ENCODE measurements at regions of chr7 and their contacts with region 1.

Region 1: GRCh38 chr7:22559829-22560489 is 60.0 kb upstream of the STEAP1B start:
- DNase-seq: peak; percentile 70 to 83 (median 80)
- ATAC-seq: peak; percentile 76
- H3K4me3 ChIP-seq: no peak overlapping the region
- H3K27ac ChIP-seq: no peak overlapping the region
- H3K4me1 ChIP-seq: peaks cover 40% of the 10 kb centered on the region
- H3K27me3 ChIP-seq: no peaks in the 10 kb centered on the region
- CTCF ChIP-seq: peak; percentile 63 to 99 (median 96)
- POLR2A ChIP-seq: no peak

Region 2: DNA sequence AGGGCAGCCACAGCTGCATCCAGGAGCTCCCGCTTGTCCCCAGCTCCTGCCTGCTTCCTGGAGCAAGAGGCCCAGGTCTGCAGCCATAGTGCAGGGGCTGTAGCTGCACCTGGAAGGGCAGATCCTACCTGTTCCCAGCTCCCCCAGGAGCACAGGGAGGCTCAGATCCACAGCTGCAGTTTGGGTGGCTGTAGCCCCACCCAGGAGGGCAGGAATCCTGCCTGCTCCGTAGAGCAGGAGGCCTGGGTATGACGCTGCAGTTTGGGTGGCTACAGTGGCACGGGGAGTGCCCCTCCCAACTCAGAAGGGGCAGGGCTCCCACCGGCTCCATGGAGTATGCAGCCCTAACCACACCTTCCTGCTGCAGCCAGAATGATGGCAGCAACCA is 587.6 kb before region 1 on chr7:
- intact Hi-C with region 1: no loop called
- DNase-seq: no peak
- ATAC-seq: no peak
- H3K4me3 ChIP-seq: no peak overlapping the region
- H3K27ac ChIP-seq: no peak overlapping the region
- H3K4me1 ChIP-seq: no peaks in the 10 kb centered on the region
- H3K27me3 ChIP-seq: no peaks in the 10 kb centered on the region
- CTCF ChIP-seq: no peak
- POLR2A ChIP-seq: no peak

Region 3: DNA sequence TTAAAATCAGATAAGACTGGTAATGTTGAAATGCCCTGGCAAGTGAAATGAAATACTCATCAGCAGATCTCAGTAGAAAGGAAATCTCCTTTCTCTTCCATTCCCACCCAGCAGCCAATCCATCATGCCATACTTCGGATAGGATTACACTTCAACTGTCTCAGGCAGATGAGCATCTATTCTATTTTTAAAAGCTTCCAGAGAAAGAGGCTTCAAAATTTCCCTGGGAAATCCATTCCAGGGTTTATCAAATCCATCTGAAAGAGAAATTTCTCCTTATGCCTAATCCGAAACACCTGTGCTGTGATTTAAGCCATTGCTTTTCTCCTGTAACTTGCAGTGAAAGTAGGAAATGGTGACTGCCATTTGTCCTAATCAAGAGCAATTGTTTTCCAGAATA is 142.6 kb before region 1 on chr7:
- intact Hi-C with region 1: no loop called
- DNase-seq: no peak
- ATAC-seq: no peak
- H3K4me3 ChIP-seq: no peak overlapping the region
- H3K27ac ChIP-seq: no peak overlapping the region
- H3K4me1 ChIP-seq: no peaks in the 10 kb centered on the region
- H3K27me3 ChIP-seq: no peaks in the 10 kb centered on the region
- CTCF ChIP-seq: no peak
- POLR2A ChIP-seq: no peak

Region 4: GRCh38 chr7:22430457-22430856 is 129.5 kb before region 1 on chr7:
- intact Hi-C with region 1: no loop called
- DNase-seq: no peak
- ATAC-seq: no peak
- H3K4me3 ChIP-seq: no peak overlapping the region
- H3K27ac ChIP-seq: no peak overlapping the region
- H3K4me1 ChIP-seq: no peaks in the 10 kb centered on the region
- H3K27me3 ChIP-seq: no peaks in the 10 kb centered on the region
- CTCF ChIP-seq: no peak
- POLR2A ChIP-seq: no peak

Region 5: GRCh38 chr7:22726345-22727185 is 166.6 kb after region 1 on chr7:
- intact Hi-C with region 1: loop called (anchors 5 kb)
- DNase-seq: peak; percentile 44 to 63 (median 52)
- ATAC-seq: peak; percentile 74
- H3K4me3 ChIP-seq: no peak overlapping the region
- H3K27ac ChIP-seq: peak overlapping the region in 2 of 4 donors; percentile 52
- H3K4me1 ChIP-seq: peaks cover 30% of the 10 kb centered on the region
- H3K27me3 ChIP-seq: no peaks in the 10 kb centered on the region
- CTCF ChIP-seq: peak in 6 of 7 experiments; percentile 26 to 69 (median 52)
- POLR2A ChIP-seq: no peak

Region 6: DNA sequence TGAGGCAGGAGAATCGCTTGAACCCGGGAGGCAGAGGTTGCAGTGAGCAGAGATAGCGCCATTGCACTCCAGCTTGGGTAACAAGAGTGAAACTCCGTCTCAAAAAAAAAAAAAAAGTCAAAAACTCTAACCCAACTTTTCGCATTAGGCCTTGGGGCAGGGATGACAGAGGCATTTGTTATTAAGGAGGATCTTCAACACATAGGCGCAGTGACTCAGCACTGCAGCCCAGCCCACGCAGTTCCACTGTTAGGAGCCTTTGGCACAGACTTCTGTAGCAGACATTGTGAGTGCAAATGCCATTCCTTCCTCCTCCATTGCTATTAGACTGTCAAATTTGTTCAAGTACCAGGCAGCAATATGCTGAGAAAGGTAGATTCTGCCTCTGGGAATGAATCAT is 502.5 kb after region 1 on chr7:
- intact Hi-C with region 1: loop called (anchors 5 kb)
- DNase-seq: no peak
- ATAC-seq: no peak
- H3K4me3 ChIP-seq: no peak overlapping the region
- H3K27ac ChIP-seq: no peak overlapping the region
- H3K4me1 ChIP-seq: no peaks in the 10 kb centered on the region
- H3K27me3 ChIP-seq: no peaks in the 10 kb centered on the region
- CTCF ChIP-seq: no peak
- POLR2A ChIP-seq: no peak